Posterior vena cava (tissue), 2 donors: ENCODE measurements at regions of chr13 and their contacts with region 1.

Region 1: DNA sequence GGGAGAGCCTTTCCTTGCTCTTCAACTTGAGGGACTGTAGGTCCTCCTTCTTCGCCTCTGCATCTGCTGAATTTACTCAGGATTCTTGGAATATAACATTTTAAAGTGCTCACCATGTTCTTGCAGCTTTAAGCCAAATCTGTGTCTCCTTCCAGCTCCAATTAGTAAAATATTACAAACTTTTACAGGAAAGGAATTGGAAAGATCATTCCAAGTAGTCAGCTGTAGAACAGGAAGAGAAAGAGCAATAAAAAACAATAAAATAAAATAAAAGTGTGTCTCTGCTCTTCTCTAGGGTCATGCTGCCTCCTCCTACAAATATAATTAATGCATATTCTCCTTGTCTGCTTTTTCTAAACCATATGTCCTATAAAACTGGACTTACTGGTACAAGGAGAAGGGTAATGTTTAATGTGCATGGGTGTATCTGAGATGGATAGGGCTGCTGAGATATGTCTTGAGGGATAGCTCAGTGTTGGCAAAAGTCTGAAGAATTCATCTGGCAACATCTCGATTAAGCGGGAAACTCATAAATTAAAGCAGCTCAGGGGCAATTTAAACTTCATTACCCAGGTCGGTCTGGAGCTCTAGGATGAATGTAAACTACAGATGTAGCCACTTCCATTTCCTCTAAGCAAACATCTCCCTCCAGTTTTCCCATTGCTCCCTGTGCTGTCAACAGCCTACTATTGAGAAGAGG is 25.0 kb downstream of the ENOX1 start:
- DNase-seq: no peak

Region 2: DNA sequence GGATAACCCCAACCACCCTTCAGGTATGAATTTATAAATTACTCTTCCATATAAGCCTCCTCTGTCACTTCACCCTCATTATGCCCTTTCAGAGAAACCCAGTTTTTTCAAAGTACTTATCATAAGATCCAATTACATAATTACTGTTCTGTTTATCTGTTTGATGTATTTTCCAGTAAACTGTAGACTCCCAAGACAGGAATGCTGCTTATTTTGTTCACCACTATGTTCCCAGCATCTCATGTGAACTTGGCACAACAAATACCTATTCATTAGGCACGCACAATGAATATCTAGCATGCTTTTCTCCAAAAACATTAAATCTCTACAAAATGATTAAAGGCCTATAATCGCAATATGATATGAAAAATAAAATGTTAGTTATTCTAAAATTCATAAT is 11.8 kb after region 1 on chr13:
- intact Hi-C with region 1: loop called in 1 of 2 experiments (anchors 1 kb)
- DNase-seq: no peak